ENCODE measurements at regions of chr3 and their contacts with region 1.

Region 1: GRCh38 chr3:152524198-152525140 is 255.7 kb downstream of the MBNL1 start:
- DNase-seq: no peak
- H3K4me3 Mint-ChIP-seq: no peak overlapping the region
- H3K27ac Mint-ChIP-seq: no peak overlapping the region
- H3K4me1 Mint-ChIP-seq: no peaks in the 10 kb centered on the region
- H3K27me3 Mint-ChIP-seq: no peaks in the 10 kb centered on the region

Region 2: DNA sequence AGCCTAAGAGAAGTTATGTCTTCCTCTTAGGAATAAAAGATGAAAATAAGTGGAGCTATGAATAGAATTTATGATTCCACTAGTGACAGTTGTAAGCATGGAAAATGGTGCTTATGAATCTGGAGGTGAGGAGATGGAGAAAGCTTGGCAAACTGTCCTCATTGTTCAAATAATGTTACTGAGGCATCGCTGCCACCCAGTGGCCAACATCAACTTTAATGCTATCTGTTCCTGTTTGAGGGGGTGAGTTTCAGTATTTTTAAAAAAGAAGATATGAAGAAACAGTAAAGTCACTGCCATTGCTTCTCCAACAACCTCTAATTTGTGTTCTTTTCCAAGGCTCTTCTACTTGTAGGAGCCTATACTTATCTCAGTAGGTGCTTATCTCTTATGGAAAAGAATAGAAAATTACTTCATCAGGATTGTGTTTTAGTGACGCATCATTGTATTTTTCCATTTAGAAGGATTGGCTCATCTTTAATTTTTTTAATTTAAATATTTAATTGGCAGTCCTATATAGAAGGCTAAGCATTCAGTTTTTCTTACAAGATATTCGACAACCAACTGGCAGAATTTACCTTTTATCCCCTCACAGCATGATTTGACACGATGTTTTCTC is 50.1 kb after region 1 on chr3:
- CTCF ChIA-PET with region 1: interaction called, 3 read pairs
- POLR2A ChIA-PET with region 1: no interaction called
- intact Hi-C with region 1: loop called (anchors 2 kb)
- DNase-seq: peak; percentile 53
- H3K4me3 Mint-ChIP-seq: no peak overlapping the region
- H3K27ac Mint-ChIP-seq: no peak overlapping the region
- H3K4me1 Mint-ChIP-seq: no peaks in the 10 kb centered on the region
- H3K27me3 Mint-ChIP-seq: no peaks in the 10 kb centered on the region

Region 3: GRCh38 chr3:153192327-153192726 is 667.9 kb after region 1 on chr3:
- CTCF ChIA-PET with region 1: no interaction called
- POLR2A ChIA-PET with region 1: no interaction called
- intact Hi-C with region 1: no loop called
- DNase-seq: no peak
- H3K4me3 Mint-ChIP-seq: no peak overlapping the region
- H3K27ac Mint-ChIP-seq: no peak overlapping the region
- H3K4me1 Mint-ChIP-seq: no peaks in the 10 kb centered on the region
- H3K27me3 Mint-ChIP-seq: no peaks in the 10 kb centered on the region

Measured in activated CD4-positive, alpha-beta memory T cell treated with anti-CD3 and anti-CD28 coated beads for 36 hours (primary cell).